Naive thymus-derived CD4-positive, alpha-beta T cell (primary cell): ENCODE measurements at regions of chr16 and their contacts with region 1.

Region 1: DNA sequence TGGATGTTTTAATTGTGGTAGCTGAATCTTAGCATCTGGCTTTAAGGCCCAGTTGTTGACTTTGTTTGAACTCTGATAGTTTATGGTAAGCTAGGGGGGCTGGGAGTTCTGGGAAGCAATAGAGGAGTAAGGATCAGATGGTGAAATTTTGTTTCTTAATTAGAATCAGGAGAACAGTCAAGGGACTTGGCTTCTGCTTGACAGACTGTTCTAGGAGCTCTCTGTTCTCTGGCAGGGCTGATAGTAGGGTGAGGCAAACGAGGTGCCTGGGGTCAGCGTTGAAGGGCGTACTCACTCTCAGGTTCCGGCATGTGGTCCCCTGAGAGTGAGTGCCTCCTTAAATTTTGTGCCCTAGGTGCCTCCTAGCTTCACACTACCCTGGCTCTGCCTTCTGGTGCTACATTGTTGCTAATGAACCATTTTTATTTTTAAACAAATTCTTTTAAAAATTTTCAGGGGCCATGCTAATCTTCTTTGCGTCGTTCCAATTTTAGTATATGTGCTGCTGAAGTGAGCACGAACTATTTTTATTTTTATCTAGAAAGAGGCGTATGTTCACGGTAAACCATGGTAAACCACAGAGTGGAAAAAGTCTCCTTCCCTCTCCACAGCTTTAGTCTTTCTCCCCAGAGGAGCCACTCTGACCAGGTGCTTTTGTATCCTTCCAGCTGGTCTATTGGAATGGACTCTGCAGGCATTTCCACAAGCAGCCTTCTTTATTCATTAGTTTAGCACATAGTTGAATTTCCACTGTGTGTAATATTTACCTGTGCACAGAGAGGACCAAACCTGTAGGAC is 19.7 kb downstream of the SLC7A6 start:
- DNase-seq: no peak
- ATAC-seq: no peak
- H3K4me3 ChIP-seq: peak overlapping the region; percentile 62
- H3K4me3 Mint-ChIP-seq: peak overlapping the region; percentile 78 to 93 (median 84)
- H3K27ac ChIP-seq: peak overlapping the region; percentile 68
- H3K27ac Mint-ChIP-seq: peak overlapping the region; percentile 84 to 92 (median 91)
- H3K4me1 ChIP-seq: peaks cover 71 to 97% of the 10 kb centered on the region in 2 donors
- H3K4me1 Mint-ChIP-seq: peaks cover 80 to 97% (median 89%) of the 10 kb centered on the region in 7 donors
- H3K27me3 ChIP-seq: no peaks in the 10 kb centered on the region
- H3K27me3 Mint-ChIP-seq: no peaks in the 10 kb centered on the region

Region 2: GRCh38 chr16:68298907-68299561 is 15.0 kb after region 1 on chr16:
- CTCF ChIA-PET with region 1: interaction called, 3 read pairs
- POLR2A ChIA-PET with region 1: interaction called, 531 read pairs
- intact Hi-C with region 1: loop called in 1 of 2 experiments (anchors 1 kb)
- DNase-seq: no peak
- ATAC-seq: no peak
- H3K4me3 ChIP-seq: no peak overlapping the region
- H3K4me3 Mint-ChIP-seq: no peak overlapping the region
- H3K27ac ChIP-seq: peak overlapping the region; percentile 20
- H3K27ac Mint-ChIP-seq: peak overlapping the region; percentile 1 to 80 (median 30)
- H3K4me1 ChIP-seq: no peaks in the 10 kb centered on the region
- H3K4me1 Mint-ChIP-seq: peaks cover 5 to 73% (median 40%) of the 10 kb centered on the region in 7 donors
- H3K27me3 ChIP-seq: no peaks in the 10 kb centered on the region
- H3K27me3 Mint-ChIP-seq: no peaks in the 10 kb centered on the region